Panc1 (cell line): ENCODE measurements at regions of chr12 and their contacts with region 1.

Region 1: DNA sequence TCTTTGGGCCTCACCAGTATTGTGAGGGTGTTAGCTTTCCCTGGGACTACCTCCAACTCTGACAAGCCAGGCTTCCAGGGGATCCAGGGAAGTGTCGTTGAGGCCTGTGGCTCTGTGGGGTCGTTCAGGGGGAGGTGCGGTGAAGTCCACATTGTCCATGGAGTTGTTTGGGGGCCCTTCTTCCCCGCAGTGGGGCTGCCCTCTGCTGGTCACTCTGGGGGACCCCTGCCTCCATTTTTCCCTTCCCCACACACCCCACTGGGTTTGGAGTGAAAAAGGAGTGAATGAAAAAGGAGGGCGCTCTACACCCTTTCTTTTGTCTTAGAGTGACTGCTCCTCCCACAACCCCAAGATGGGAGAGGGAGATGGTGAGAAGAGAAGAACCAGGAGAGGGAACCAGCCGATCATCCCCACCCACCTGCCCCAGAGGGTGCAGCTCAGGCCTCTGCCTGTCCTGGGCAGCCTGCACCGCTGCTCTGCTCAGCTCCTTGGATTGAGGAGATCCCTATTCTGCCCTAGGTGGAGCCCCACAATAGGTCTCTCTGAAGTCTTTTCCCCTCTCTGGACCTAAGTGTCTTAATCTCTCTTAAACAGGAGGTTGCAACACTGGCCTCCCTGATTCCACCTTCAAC is 2.0 kb downstream of the ANKRD33 start:
- DNase-seq: no peak
- ATAC-seq: no peak
- H3K4me3 ChIP-seq: no peak overlapping the region
- H3K27ac ChIP-seq: no peak overlapping the region
- H3K4me1 ChIP-seq: no peaks in the 10 kb centered on the region
- H3K27me3 ChIP-seq: no peaks in the 10 kb centered on the region
- CTCF ChIP-seq: no peak; the same call in 1 of the 2 replicates

Region 2: DNA sequence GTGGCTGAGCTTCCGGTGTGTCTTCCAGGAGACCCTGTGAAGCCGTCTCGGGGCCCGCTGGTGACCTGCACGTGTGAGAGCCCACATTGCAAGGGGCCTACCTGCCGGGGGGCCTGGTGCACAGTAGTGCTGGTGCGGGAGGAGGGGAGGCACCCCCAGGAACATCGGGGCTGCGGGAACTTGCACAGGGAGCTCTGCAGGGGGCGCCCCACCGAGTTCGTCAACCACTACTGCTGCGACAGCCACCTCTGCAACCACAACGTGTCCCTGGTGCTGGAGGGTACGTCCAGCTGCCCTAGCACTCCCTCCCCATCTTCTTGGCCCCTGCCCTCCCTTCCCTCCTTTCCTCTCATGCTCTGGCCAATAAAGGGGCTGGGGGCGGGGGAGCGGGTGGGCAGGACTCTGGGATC is 23.1 kb after region 1 on chr12:
- CTCF ChIA-PET with region 1: interaction called, 12 read pairs
- POLR2A ChIA-PET with region 1: no interaction called
- in situ Hi-C with region 1: no loop called
- intact Hi-C with region 1: no loop called
- DNase-seq: no peak
- ATAC-seq: no peak
- H3K4me3 ChIP-seq: no peak overlapping the region
- H3K27ac ChIP-seq: no peak overlapping the region
- H3K4me1 ChIP-seq: no peaks in the 10 kb centered on the region
- H3K27me3 ChIP-seq: no peaks in the 10 kb centered on the region
- CTCF ChIP-seq: no peak; the same call in 1 of the 2 replicates

Region 3: DNA sequence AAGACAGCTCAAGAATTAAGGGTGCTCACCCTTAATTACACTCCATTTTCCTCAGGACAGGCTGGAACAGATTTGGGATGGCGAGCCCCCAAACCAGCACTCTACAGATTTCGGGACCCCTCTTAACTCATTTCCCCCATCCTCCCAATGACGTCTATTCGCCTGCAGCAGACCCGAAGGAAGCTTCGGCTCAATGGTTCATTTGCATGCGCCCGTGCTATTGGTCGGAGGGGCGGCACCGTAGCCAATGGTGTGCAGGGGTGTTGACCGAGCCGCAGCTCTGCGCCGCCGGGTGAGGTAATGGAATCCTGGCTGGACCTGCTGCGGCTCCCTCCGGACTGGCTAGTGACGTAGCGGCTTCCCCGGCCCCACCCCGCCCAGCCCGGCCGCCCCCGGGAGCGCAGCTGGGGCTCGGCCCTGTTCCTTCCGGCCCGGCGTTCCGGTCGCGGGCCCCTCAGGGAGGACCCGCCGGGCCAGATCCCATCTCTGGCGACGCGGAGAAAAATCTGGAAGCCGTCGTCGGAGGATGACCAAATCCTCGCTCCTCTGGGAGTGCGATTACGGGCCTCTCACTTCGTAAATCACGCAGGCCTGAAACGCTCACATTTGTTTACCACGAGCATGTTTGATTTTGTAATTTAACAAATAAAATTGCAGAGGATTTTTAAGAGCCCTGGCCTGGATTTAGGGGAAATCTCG is 143.0 kb after region 1 on chr12:
- CTCF ChIA-PET with region 1: interaction called, 11 read pairs
- POLR2A ChIA-PET with region 1: no interaction called
- in situ Hi-C with region 1: no loop called
- intact Hi-C with region 1: no loop called
- DNase-seq: peak; percentile 60
- ATAC-seq: peak; percentile 99
- H3K4me3 ChIP-seq: peak overlapping the region; percentile 35 to 64
- H3K27ac ChIP-seq: peak overlapping the region; percentile 79
- H3K4me1 ChIP-seq: 0 out of 2 replicates have a peak, but pooled peaks cover 5% of the 10 kb centered on the region
- H3K27me3 ChIP-seq: 0 out of 2 replicates have a peak, but pooled peaks cover 2% of the 10 kb centered on the region
- CTCF ChIP-seq: no peak